Spleen (tissue), 13 donors: ENCODE measurements at regions of chr15 and their contacts with region 1.

Region 1: DNA sequence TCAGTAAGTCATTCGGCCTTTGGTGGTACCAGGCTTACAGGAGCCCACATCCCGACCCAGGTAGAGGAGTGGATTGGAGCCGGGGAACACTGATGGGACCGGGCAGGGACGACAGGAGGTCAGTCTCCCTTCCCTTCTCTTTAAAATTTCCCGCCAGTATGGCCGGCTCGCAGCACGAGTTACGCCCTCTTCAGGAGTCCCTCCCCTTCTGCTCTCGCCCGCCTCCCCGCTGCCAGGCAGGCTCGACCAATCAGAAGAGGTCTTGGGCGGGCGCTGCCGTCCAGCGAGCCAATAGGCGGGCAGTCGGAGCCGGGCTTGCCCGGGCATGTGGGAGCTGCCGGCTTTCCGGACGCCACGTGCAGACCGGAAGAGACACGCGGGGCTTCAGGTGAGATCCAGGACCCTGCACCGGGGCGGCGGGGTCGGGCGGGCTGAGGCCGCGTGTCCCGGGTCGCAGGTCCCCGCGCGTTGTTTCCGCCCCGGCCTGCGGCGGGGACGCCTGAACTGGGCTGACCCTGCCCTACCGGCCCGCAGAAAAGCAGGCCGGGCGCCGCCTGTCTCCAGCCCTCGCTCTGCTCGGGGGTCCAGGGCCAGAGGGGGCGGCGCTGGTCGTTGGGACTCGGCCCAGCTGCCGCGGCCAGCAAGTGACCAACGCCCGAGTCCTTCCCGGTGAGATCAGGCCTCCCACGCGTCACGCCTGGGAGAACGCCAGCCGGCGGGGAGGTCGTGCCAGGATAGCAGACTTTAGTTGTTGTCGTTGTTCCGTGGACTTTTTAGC is at the start of gene AEN:
- DNase-seq: peak; percentile 98
- H3K4me3 ChIP-seq: peak within 1 kb of the TSS; percentile 75 to 100 (median 98)
- H3K27ac ChIP-seq: peak within 1 kb of the TSS; percentile 66 to 99 (median 94)
- H3K4me1 ChIP-seq: peaks cover 32 to 57% (median 53%) of the 10 kb centered on the region in 6 donors
- H3K27me3 ChIP-seq: no peaks in the 10 kb centered on the region
- CTCF ChIP-seq: peak in 7 of 11 experiments; percentile 19 to 68 (median 50)
- POLR2A ChIP-seq: no peak
- total RNA-seq, gene AEN: 20.3 to 40.3 (median 29.5) TPM

Region 2: DNA sequence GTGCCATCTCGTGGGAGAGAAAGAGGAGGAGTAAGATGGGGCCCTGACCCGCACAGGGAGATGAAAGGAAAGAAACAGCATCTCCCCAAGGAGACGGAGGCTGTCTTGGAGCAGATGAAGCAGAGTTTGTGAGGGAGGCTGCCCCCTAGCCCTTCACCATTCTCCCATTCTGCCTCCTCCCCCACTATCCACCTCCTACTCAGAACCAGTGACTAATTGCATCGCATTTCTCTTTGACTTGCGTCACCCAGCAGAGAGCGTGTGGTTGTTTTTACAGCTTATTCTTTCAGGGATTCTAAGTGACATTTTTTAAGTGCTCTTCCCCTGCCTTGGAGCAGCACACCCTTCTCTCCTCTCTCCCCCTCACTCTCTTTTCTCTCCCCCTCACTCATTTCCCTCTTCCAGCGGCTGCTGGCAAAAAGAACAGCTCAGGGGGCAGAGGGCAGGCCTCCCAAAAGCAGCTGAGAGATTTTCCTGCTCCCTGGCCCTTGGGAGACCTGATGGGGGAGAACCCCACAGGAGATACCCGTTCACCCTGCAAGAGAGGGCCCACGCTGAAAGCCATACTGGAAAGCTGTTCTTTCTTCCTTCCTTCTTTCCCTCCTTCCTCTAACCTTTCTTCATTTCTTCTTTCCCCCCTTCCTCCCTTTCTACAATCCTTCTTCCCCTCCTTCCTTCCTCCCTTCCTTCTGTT is 245.8 kb before region 1 on chr15:
- intact Hi-C with region 1: no loop called
- DNase-seq: no peak
- H3K4me3 ChIP-seq: no peak overlapping the region
- H3K27ac ChIP-seq: no peak overlapping the region
- H3K4me1 ChIP-seq: no peaks in the 10 kb centered on the region
- H3K27me3 ChIP-seq: peaks cover 0 to 40% (median 0%) of the 10 kb centered on the region in 7 donors
- CTCF ChIP-seq: no peak
- POLR2A ChIP-seq: no peak

Region 3: GRCh38 chr15:88664151-88664778 is 43.1 kb after region 1 on chr15:
- intact Hi-C with region 1: loop called (anchors 5 kb)
- DNase-seq: no peak
- H3K4me3 ChIP-seq: no peak overlapping the region
- H3K27ac ChIP-seq: no peak overlapping the region
- H3K4me1 ChIP-seq: peaks cover 0 to 8% (median 0%) of the 10 kb centered on the region in 6 donors
- H3K27me3 ChIP-seq: no peaks in the 10 kb centered on the region
- CTCF ChIP-seq: peak in 8 of 11 experiments; percentile 22 to 59 (median 48)
- POLR2A ChIP-seq: no peak

Region 4: DNA sequence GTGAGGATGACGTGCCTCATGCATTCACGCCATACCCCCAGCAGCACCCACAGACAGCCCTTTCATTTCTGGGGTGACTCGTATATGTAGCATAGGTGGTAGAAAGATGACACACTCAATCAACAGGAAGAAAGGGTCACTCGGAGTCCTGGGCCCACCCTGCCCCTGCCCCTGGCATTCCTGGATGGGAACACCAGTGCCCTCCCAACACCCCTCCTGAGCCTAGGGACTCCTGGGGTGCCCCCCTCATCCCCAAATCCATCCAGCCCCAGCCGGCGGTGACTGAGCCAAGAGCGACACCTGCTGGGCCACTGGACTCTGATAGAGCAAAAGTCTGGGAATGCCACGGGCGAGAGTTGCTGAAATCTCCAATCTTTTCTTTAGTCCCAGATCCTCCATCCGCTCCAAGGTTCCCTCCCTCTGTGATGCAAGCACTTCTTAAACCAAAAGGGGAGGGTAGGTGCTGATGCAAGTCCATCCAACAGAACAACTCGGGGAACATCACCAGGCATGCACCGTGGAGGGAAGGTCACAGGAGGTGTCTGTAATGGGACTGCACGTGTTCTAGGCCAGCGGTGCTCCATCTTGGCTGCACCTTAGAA is 213.1 kb after region 1 on chr15:
- intact Hi-C with region 1: loop called (anchors 10 kb)
- DNase-seq: peak; percentile 80
- H3K4me3 ChIP-seq: no peak overlapping the region
- H3K27ac ChIP-seq: no peak overlapping the region
- H3K4me1 ChIP-seq: peaks cover 0 to 8% (median 0%) of the 10 kb centered on the region in 6 donors
- H3K27me3 ChIP-seq: peaks cover 0 to 8% (median 0%) of the 10 kb centered on the region in 7 donors
- CTCF ChIP-seq: peak in 9 of 11 experiments; percentile 25 to 63 (median 55)
- POLR2A ChIP-seq: no peak

Region 5: DNA sequence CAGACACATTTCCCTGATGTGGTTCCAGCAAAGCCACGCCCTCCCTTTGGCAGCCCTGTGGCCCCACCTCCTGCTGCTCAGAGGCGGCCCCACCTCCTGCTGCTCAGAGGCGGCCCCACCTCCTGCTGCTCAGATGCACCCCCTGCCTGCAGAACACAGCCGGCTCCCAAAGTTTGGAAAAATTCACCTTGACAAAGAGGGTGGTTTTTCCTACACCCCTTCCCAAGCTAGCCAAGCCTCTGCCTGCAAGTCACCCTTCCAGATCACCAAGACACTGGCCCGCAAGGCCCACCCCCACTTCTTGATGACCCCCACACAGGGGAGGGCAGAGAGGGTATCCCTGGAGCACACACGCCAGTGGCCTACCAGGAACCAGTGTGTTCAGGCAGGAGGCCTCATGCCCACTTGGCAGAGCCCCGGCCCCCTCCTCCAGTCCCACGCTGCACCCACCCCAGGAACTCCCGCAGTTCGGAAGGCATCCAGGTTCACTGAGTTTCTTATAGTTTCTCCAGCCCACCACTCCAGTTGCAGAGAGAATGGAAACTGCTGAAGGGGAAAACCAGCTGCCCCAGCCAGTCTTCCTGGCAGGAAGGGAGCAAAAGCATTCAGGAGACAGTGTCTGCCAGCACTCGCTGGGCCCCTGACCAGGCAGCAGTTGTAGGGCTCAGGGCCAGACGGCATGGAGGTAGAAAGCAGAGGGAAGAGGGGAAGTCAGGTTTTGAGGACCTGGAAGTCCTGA is 276.4 kb after region 1 on chr15:
- intact Hi-C with region 1: loop called (anchors 5 kb)
- DNase-seq: peak; percentile 94
- H3K4me3 ChIP-seq: no peak overlapping the region
- H3K27ac ChIP-seq: peak overlapping the region in 2 of 8 donors; percentile 21 to 28
- H3K4me1 ChIP-seq: peaks cover 12 to 45% (median 33%) of the 10 kb centered on the region in 6 donors
- H3K27me3 ChIP-seq: peaks cover 0 to 26% (median 16%) of the 10 kb centered on the region in 7 donors
- CTCF ChIP-seq: peak in 9 of 11 experiments; percentile 31 to 72 (median 53)
- POLR2A ChIP-seq: no peak